ENCODE measurements at regions of chr19 and their contacts with region 1.

Region 1: DNA sequence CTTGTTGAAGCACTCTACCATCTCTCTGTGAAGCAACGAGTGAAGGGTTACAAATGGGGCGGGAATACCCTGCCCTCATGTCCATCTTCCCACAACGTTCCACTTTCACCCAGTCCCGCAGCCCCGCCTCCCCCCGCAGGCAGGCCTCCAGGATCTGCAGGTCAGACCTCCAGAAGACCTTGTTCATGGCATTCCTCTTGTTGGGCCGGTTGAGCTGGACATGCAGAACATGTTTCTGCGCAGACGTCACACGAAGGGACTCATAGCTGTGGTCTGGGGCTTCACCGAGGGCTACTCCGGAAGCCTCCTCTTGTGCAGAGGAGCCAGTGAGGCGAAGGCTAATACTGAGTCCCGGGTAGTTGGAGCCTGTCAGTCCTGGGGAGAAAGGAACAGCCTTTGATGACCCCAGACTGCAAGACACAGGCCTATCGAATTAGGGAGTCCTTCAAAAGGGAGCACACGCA is 420 bp downstream of the ECH1 start:
- DNase-seq: peak; percentile 95
- ATAC-seq: peak; percentile 75
- H3K4me3 ChIP-seq: peak overlapping the region; percentile 61
- H3K27ac ChIP-seq: peak overlapping the region; percentile 95
- H3K4me1 ChIP-seq: peaks cover 16% of the 10 kb centered on the region
- H3K27me3 ChIP-seq: no peaks in the 10 kb centered on the region
- CTCF ChIP-seq: no peak
- POLR2A ChIP-seq: no peak
- RAD21 ChIP-seq: peak; percentile 4; the same call in 1 of the 2 replicates

Region 2: GRCh38 chr19:38658462-38659306 is 172.5 kb before region 1 on chr19:
- CTCF ChIA-PET with region 1: no interaction called
- POLR2A ChIA-PET with region 1: no interaction called
- dilution Hi-C with region 1: no loop called
- in situ Hi-C with region 1: no loop called
- intact Hi-C with region 1: loop called (anchors 5 kb)
- DNase-seq: peak; percentile 100
- ATAC-seq: peak; percentile 67
- H3K4me3 ChIP-seq: peak overlapping the region; percentile 17; the same call in 1 of the 2 replicates
- H3K27ac ChIP-seq: peak overlapping the region; percentile 97
- H3K4me1 ChIP-seq: peaks cover 44% of the 10 kb centered on the region
- H3K27me3 ChIP-seq: no peaks in the 10 kb centered on the region
- CTCF ChIP-seq: no peak
- POLR2A ChIP-seq: peak; percentile 74; the same call in 1 of the 2 replicates
- RAD21 ChIP-seq: peak; percentile 30; the same call in 1 of the 2 replicates

Region 3: DNA sequence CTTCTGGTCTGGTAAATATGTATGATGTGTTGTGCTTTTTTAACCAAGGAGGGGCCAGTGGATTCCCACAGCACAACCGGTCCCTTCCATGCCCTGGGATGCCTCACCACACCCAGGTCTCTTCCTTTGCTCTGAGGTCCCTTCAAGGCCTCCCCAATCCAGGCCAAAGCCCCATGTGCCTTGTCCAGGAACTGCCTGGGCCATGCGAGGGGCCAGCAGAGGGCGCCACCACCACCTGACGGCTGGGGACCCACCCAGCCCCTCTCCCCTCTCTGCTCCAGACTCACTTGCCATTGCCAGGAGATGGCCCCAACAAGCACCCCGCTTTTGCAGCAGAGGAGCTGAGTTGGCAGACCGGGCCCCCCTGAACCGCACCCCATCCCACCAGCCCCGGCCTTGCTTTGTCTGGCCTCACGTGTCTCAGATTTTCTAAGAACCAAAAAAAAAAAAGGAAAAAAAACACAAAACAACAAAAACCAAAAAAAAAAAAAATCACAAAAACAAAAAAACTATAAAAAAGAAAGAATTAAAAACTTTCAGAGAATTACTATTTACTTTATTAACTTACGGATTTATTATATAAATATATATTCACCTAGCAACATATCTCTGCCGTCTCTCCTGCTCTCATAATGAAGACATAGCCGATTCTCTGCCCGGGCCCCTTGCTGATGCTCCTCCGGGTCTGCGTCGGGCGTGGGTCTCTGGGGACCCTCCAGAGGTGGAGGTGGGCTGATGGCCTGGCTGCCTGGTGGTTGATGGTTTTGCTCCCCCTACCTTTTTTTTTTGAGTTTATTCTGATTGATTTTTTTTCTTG is 101.3 kb before region 1 on chr19:
- CTCF ChIA-PET with region 1: no interaction called
- POLR2A ChIA-PET with region 1: no interaction called
- dilution Hi-C with region 1: no loop called
- in situ Hi-C with region 1: no loop called
- intact Hi-C with region 1: loop called (anchors 5 kb)
- DNase-seq: peak; percentile 44
- ATAC-seq: peak; percentile 60
- H3K4me3 ChIP-seq: no peak overlapping the region
- H3K27ac ChIP-seq: no peak overlapping the region
- H3K4me1 ChIP-seq: peaks cover 12% of the 10 kb centered on the region
- H3K27me3 ChIP-seq: no peaks in the 10 kb centered on the region
- CTCF ChIP-seq: peak; percentile 79
- POLR2A ChIP-seq: no peak
- RAD21 ChIP-seq: peak; percentile 65

Region 4: GRCh38 chr19:38799071-38799744 is 32.0 kb before region 1 on chr19:
- CTCF ChIA-PET with region 1: no interaction called
- POLR2A ChIA-PET with region 1: no interaction called
- dilution Hi-C with region 1: no loop called
- in situ Hi-C with region 1: no loop called
- intact Hi-C with region 1: loop called (anchors 1 kb)
- DNase-seq: peak; percentile 42
- ATAC-seq: peak; percentile 62
- H3K4me3 ChIP-seq: no peak overlapping the region
- H3K27ac ChIP-seq: peak overlapping the region; percentile 63; the same call in 1 of the 2 replicates
- H3K4me1 ChIP-seq: 0 out of 2 replicates have a peak, but pooled peaks cover 2% of the 10 kb centered on the region
- H3K27me3 ChIP-seq: peaks cover 2% of the 10 kb centered on the region; the same call in 1 of the 2 replicates
- CTCF ChIP-seq: no peak
- POLR2A ChIP-seq: no peak
- RAD21 ChIP-seq: no peak

Region 5: GRCh38 chr19:38849860-38850435 is 18.8 kb after region 1 on chr19 and contains the start of gene HNRNPL:
- CTCF ChIA-PET with region 1: interaction called, 3 read pairs
- POLR2A ChIA-PET with region 1: no interaction called
- dilution Hi-C with region 1: no loop called
- in situ Hi-C with region 1: no loop called
- intact Hi-C with region 1: loop called (anchors 2 kb)
- DNase-seq: peak; percentile 100
- ATAC-seq: peak; percentile 73
- H3K4me3 ChIP-seq: peak within 1 kb of the TSS; percentile 54
- H3K27ac ChIP-seq: peak within 1 kb of the TSS; percentile 72
- H3K4me1 ChIP-seq: peaks cover 15% of the 10 kb centered on the region
- H3K27me3 ChIP-seq: no peaks in the 10 kb centered on the region
- CTCF ChIP-seq: peak; percentile 64
- POLR2A ChIP-seq: peak; percentile 96
- RAD21 ChIP-seq: no peak
- total RNA-seq, gene HNRNPL: 316 and 429 TPM in 2 replicates